AG04449 (cell line): ENCODE measurements at regions of chr17 and their contacts with region 1.

Region 1: DNA sequence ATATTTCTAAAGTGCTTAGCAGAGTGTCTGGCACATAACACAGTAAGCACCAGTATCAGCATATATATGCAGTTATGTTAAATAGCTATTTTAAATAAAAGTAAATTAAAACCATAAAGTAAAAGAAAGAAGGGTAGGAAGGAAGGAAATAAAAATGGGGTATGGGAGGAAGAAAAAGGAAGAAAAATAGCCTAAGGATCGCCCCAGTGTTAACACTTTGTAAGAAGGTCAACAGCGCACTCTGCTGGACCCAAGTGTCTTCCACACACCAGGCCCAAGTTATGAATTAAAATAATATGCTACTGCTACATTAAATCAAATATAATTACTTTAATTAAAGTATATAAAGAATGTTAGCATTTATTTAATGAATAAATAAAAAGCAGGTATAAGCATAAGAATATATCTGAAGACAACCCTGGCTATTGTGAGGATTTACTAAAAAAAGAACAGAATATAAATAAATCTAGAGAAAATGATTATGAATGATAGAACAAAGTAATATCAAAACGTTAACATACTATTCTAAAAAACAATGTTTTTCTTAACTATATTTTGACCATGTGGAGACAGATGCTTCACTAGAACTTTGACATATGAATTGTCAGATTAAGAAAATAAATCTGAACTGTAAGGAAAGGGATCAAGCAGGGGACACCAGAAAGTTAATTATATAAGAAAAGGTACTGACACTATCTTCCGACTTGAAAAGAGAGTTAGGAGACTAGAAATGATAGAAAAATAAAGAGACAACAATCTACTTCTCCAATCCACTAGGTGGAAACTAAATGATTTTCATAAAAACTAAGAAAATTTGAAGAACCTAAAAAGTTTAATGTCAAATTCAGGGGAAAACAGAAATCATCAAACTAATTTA is 25.9 kb downstream of the BRIP1 start:
- DNase-seq: no peak
- H3K4me3 ChIP-seq: no peak overlapping the region
- CTCF ChIP-seq: peak; percentile 67

Region 2: GRCh38 chr17:61583242-61583641 is 254.2 kb before region 1 on chr17:
- CTCF ChIA-PET with region 1: interaction called, 10 read pairs
- POLR2A ChIA-PET with region 1: no interaction called
- DNase-seq: peak; percentile 16
- H3K4me3 ChIP-seq: no peak overlapping the region
- CTCF ChIP-seq: peak; percentile 25

Region 3: GRCh38 chr17:61635913-61636432 is 201.4 kb before region 1 on chr17:
- CTCF ChIA-PET with region 1: interaction called, 117 read pairs
- POLR2A ChIA-PET with region 1: no interaction called
- DNase-seq: no peak
- H3K4me3 ChIP-seq: no peak overlapping the region
- CTCF ChIP-seq: peak; percentile 62

Region 4: DNA sequence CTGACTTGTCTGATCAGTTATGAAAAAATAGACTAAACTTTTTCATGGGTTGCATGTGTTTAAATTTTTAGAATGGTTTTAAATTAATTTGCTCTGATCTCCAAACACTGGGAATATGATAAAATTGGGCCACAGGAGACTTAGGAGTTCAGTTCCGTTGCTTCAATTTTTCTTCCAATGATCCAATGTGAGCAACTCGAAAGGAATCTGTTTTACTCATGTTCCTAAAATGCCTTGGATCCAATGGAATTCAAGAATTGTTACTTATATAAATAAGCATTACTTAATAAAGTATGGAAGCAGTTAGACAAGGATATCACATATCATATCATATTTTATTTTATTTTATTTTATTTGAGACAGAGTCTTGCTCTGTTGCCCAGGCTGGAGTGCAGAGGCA is 190.4 kb before region 1 on chr17:
- CTCF ChIA-PET with region 1: interaction called, 31 read pairs
- POLR2A ChIA-PET with region 1: no interaction called
- DNase-seq: peak; percentile 36
- H3K4me3 ChIP-seq: no peak overlapping the region
- CTCF ChIP-seq: no peak

Region 5: GRCh38 chr17:61815897-61816503 is 21.4 kb before region 1 on chr17:
- CTCF ChIA-PET with region 1: interaction called, 16 read pairs
- POLR2A ChIA-PET with region 1: no interaction called
- DNase-seq: no peak
- H3K4me3 ChIP-seq: no peak overlapping the region
- CTCF ChIP-seq: no peak

Region 6: DNA sequence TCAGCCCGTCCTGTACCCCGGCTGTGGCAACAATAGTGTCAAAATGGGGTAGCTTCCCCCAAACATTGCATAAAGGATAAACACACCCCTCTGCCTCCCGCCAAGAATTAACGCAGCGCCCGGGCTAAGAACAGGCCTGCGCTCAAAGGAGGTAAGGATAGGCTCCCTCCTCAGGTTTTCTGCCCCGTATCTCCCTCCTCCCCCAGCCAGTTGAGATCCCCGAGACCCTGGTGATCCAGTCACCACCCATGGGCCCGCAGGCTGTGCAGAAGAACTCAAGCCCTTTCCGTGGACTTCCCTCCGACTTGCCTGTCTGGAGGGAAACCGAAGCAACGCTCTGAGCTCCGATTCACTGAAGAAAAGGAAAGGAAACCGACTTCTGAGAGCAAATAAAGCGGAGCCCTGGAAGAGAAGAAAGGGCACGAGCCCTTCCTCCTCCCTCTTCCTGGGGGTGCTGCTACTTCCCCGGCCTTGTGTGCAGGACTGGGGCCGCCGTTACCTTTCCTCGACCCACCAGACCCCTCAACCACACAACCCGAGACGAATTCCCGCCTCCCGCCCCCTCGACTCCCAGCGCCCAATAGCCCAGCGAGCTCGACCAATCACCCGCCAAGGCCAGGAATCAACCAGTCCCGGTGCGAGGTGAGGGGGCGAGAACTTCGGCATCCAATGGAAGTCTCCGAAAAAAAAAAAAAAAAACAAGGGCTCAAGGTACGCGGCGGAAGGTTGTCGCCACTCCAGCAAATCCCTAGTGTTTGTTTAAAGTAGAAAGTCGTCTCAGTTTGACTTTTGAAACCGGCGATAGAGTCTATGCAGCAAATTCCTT is 25.8 kb after region 1 on chr17 and contains the start of gene BRIP1:
- CTCF ChIA-PET with region 1: interaction called, 10 read pairs
- POLR2A ChIA-PET with region 1: no interaction called
- DNase-seq: peak; percentile 61
- H3K4me3 ChIP-seq: peak within 1 kb of the TSS; percentile 79
- CTCF ChIP-seq: no peak

Region 7: GRCh38 chr17:61883211-61883610 is 45.8 kb after region 1 on chr17:
- CTCF ChIA-PET with region 1: no interaction called
- POLR2A ChIA-PET with region 1: no interaction called
- DNase-seq: no peak
- H3K4me3 ChIP-seq: no peak overlapping the region
- CTCF ChIP-seq: no peak